Activated CD4-positive, alpha-beta memory T cell treated with anti-CD3 and anti-CD28 coated beads, Interleukin-2, amount 10 ng/mL, durations not matched to agents 7 days and 5 days (primary cell): ENCODE measurements at regions of chr5 and their contacts with region 1.

Region 1: GRCh38 chr5:154189819-154190594 is 526 bp upstream of the GALNT10 start:
- DNase-seq: peak; percentile 85
- H3K4me3 Mint-ChIP-seq: peak overlapping the region; percentile 80
- H3K27ac Mint-ChIP-seq: peak overlapping the region; percentile 75
- H3K4me1 Mint-ChIP-seq: peaks cover 35% of the 10 kb centered on the region
- H3K27me3 Mint-ChIP-seq: peaks cover 4% of the 10 kb centered on the region

Region 2: DNA sequence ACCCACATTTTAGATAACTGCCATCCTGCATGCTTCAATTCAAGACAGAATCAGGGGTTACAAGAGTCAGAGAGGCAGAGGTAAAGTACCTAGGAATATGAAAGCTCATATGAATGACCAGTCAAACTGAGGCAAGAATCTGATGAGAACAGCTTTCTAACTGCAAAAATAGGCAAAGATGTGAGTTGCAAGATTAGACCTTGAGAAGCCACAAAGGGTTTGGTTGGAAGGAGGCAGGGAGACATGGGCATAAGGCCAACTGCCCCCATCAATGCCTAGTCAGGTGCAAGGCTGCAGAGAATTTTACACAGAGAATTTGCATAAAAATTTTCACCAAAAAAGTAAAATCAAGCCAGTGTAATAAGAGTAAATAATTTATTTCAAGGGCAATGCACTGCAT is 164.1 kb before region 1 on chr5:
- CTCF ChIA-PET with region 1: no interaction called
- POLR2A ChIA-PET with region 1: no interaction called
- DNase-seq: no peak
- H3K4me3 Mint-ChIP-seq: no peak overlapping the region
- H3K27ac Mint-ChIP-seq: no peak overlapping the region
- H3K4me1 Mint-ChIP-seq: no peaks in the 10 kb centered on the region
- H3K27me3 Mint-ChIP-seq: no peaks in the 10 kb centered on the region

Region 3: GRCh38 chr5:154038707-154039457 is 151.1 kb before region 1 on chr5 and contains the starts of genes FAM114A2 and MFAP3:
- CTCF ChIA-PET with region 1: interaction called, 17 read pairs
- POLR2A ChIA-PET with region 1: interaction called, 24 read pairs
- DNase-seq: peak; percentile 92
- H3K4me3 Mint-ChIP-seq: peak within 1 kb of the TSS; percentile 99
- H3K27ac Mint-ChIP-seq: peak within 1 kb of the TSS; percentile 96
- H3K4me1 Mint-ChIP-seq: peaks cover 49% of the 10 kb centered on the region
- H3K27me3 Mint-ChIP-seq: no peaks in the 10 kb centered on the region
- total RNA-seq, gene FAM114A2: 27.0 to 28.5 TPM
- total RNA-seq, gene MFAP3: 23.5 to 25.5 TPM

Region 4: GRCh38 chr5:154077696-154078095 is 112.3 kb before region 1 on chr5:
- CTCF ChIA-PET with region 1: interaction called, 190 read pairs
- POLR2A ChIA-PET with region 1: interaction called, 36 read pairs
- DNase-seq: no peak
- H3K4me3 Mint-ChIP-seq: no peak overlapping the region
- H3K27ac Mint-ChIP-seq: no peak overlapping the region
- H3K4me1 Mint-ChIP-seq: peaks cover 42% of the 10 kb centered on the region
- H3K27me3 Mint-ChIP-seq: no peaks in the 10 kb centered on the region

Region 5: DNA sequence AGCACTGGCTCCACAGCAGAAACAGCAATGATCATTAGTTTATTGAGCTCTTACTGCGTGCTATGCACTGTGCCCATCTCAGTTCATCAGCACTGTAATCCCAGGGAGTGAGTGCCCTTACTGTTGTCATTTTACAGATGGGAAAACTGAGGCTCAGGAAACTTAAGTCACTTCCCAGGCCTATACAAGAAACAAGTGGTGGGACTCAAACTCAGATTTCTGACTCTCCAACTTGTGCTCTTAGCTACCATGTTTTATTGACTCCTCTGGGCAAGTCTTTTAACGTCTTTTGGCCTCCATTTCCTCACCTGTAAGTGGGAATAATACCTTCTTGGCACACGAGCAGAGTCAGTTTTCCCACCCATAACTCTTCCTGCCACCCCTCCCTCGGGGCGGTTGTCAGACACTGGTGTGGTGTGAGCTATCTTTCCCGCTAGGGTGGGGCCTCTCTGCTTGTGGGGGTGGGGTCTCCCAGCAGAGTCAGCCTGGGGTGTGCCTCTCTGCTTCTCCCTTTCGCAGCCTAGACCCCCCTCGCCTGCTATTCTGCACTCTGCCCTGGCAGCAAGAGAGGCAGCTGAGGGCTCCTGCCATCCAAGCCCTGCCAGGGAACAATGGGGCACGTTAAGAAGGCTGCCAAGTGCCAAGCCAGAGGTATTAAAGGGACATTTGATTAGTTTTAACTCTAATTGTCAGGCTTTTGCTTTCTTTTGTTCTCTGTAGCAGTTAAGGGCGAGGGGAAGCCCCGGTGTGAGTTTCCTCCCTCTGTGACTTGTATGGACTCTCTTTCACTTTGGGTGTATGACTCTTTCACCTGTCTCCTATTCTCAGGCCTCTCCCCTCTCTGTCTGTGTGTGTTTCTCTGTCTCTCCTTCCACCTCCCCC is 12.6 kb after region 1 on chr5:
- CTCF ChIA-PET with region 1: interaction called, 29 read pairs
- POLR2A ChIA-PET with region 1: interaction called, 35 read pairs
- DNase-seq: peak; percentile 64
- H3K4me3 Mint-ChIP-seq: peak overlapping the region; percentile 21
- H3K27ac Mint-ChIP-seq: peak overlapping the region; percentile 47
- H3K4me1 Mint-ChIP-seq: peaks cover 57% of the 10 kb centered on the region
- H3K27me3 Mint-ChIP-seq: no peaks in the 10 kb centered on the region

Region 6: GRCh38 chr5:154221371-154221896 is 31.4 kb after region 1 on chr5:
- CTCF ChIA-PET with region 1: interaction called, 9 read pairs
- POLR2A ChIA-PET with region 1: interaction called, 17 read pairs
- DNase-seq: peak; percentile 77
- H3K4me3 Mint-ChIP-seq: no peak overlapping the region
- H3K27ac Mint-ChIP-seq: peak overlapping the region; percentile 85
- H3K4me1 Mint-ChIP-seq: peaks cover 54% of the 10 kb centered on the region
- H3K27me3 Mint-ChIP-seq: no peaks in the 10 kb centered on the region

Region 7: DNA sequence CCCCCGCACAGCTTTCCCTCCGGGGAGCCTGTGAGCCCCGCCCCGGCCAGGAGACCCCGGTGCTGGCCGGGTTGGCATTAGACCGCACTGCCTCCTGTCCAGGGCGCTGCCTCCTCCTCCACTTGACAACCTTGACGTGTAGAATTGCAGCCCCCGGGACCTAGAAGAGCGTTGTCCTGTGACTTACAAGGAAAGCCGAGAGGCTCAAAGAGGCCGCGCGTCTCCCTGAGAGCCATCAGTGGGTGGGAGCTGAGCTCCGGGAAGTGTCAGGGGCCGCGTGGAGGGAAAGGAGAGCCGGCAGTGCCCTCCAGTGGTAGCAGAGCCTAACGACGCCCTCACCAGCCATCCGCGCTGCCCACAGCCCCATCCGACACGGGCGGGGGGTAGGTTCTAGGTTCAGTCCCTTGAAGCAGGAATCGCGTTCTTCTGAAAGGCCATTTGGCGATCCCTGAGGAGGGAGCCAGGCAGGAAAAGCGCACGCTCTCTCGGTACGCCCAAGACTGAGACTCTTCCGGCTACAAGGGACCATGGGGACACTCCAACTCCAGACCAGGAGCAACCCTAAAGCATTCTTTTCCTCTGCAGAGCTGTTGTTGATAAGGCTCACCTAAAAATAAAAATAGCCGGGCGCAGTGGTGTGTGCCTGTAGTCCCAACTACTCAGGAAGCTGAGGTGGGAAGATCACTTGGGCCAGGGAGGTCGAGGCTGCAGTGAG is 215.2 kb after region 1 on chr5:
- CTCF ChIA-PET with region 1: interaction called, 48 read pairs
- POLR2A ChIA-PET with region 1: interaction called, 8 read pairs
- DNase-seq: peak; percentile 77
- H3K4me3 Mint-ChIP-seq: no peak overlapping the region
- H3K27ac Mint-ChIP-seq: no peak overlapping the region
- H3K4me1 Mint-ChIP-seq: peaks cover 8% of the 10 kb centered on the region
- H3K27me3 Mint-ChIP-seq: no peaks in the 10 kb centered on the region